ENCODE measurements at regions of chr6 and their contacts with region 1.

Region 1: DNA sequence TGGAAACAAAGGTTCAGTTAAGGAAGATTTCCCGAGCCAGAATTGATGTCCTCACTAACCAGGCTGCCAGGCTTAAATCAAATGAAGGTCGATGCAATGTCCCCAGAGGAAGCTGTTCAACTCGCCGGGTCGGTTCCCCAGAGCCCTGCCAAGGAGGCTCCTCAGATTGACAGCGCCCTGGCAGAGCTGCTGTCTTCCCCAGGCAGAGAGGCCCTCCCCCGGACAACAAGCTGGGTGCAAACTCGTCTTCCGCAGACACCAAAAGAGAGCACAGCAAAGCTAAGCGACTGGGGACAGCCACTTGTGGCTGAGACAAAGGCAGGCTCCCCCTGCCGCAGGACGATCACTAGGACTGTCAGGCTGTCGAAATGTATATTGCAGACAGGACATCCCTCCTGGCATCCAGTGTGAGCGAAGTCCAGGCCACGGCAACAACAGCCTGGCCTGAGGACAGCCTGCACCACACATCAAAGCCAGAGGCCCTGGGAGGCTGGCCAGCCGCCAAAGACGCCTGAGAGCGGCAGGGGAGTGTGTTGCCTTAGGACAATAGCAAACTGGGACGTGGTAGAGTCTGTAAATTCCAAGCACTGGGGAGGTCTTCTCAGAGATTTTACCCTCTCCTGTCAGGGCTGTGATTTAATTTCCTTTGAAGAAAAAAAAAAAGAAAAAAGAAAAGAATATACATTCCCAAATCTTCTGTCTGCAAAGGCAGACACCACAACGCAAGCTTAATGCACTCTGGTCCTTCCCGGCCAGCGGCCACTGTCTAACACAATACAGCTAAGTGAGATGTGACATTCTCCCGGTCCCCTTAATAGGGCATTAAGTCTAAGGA is 99.1 kb downstream of the HIVEP2 start:
- DNase-seq: peak; percentile 92
- H3K4me3 Mint-ChIP-seq: peak overlapping the region; percentile 69
- H3K27ac Mint-ChIP-seq: peak overlapping the region; percentile 95
- H3K4me1 Mint-ChIP-seq: peaks cover 70% of the 10 kb centered on the region
- H3K27me3 Mint-ChIP-seq: no peaks in the 10 kb centered on the region
- CTCF ChIP-seq: no peak

Region 2: GRCh38 chr6:142349187-142349823 is 496.5 kb before region 1 on chr6:
- CTCF ChIA-PET with region 1: no interaction called
- POLR2A ChIA-PET with region 1: no interaction called
- intact Hi-C with region 1: no loop called
- DNase-seq: no peak
- H3K4me3 Mint-ChIP-seq: no peak overlapping the region
- H3K27ac Mint-ChIP-seq: no peak overlapping the region
- H3K4me1 Mint-ChIP-seq: peaks cover 6% of the 10 kb centered on the region
- H3K27me3 Mint-ChIP-seq: no peaks in the 10 kb centered on the region
- CTCF ChIP-seq: no peak

Region 3: GRCh38 chr6:142827369-142827768 is 18.5 kb before region 1 on chr6:
- CTCF ChIA-PET with region 1: interaction called, 4 read pairs
- POLR2A ChIA-PET with region 1: interaction called, 101 read pairs
- intact Hi-C with region 1: no loop called
- DNase-seq: peak; percentile 84
- H3K4me3 Mint-ChIP-seq: no peak overlapping the region
- H3K27ac Mint-ChIP-seq: no peak overlapping the region
- H3K4me1 Mint-ChIP-seq: peaks cover 28% of the 10 kb centered on the region
- H3K27me3 Mint-ChIP-seq: no peaks in the 10 kb centered on the region
- CTCF ChIP-seq: no peak

Region 4: DNA sequence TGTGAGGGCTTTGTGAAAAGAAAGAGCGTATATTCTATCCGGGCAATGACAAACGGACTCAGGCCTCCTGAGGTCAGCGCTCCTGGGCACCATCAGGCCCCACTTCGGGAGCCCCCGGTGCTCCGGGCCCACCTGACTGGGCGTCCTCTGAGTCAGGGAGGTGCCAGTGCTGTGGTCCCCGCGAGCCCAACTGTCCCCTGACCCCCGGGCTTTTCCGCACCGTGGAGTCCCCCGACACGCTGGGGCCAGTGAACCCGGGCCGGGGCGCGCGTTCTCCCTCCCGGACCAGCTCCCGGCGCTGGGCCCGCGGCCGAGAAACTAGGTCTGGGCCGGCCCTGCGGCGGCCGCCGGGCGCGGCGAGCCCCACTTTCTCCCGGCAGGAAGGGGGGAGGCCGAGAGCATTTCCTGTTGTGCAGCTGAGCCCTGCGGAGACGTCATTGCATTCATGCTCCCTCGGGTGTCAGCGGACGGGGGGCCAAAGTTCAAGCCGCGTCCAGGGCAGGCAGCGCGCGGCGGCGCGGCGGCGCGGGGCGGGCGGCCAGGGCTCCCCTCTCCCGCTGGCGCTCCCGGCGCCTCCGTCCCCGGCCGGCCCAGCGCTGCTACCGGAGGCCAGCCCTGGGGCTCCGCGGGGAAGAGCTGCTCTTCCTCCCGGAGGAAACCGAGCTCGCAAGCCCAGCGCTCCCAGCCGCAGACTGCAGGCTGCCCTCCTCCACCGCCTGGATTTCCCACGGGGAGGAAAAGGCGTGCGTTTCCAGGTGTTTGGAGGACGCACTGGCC is 80.8 kb after region 1 on chr6:
- CTCF ChIA-PET with region 1: no interaction called
- POLR2A ChIA-PET with region 1: interaction called, 10 read pairs
- intact Hi-C with region 1: no loop called
- DNase-seq: peak; percentile 61
- H3K4me3 Mint-ChIP-seq: peak overlapping the region; percentile 84
- H3K27ac Mint-ChIP-seq: peak overlapping the region; percentile 92
- H3K4me1 Mint-ChIP-seq: peaks cover 44% of the 10 kb centered on the region
- H3K27me3 Mint-ChIP-seq: no peaks in the 10 kb centered on the region
- CTCF ChIP-seq: no peak